Endothelial cell of umbilical vein (primary cell): ENCODE measurements at regions of chr3 and their contacts with region 1.

Region 1: GRCh38 chr3:111717601-111718000 is 122.5 kb upstream of the ZBED2 start:
- DNase-seq: peak; percentile 83
- H3K4me3 ChIP-seq: no peak overlapping the region
- H3K27ac ChIP-seq: peak overlapping the region; percentile 18
- H3K4me1 ChIP-seq: peaks cover 6% of the 10 kb centered on the region
- H3K27me3 ChIP-seq: no peaks in the 10 kb centered on the region
- CTCF ChIP-seq: peak; percentile 81 to 82
- POLR2A ChIP-seq: no peak

Region 2: GRCh38 chr3:111577794-111578685 is 139.6 kb before region 1 on chr3:
- CTCF ChIA-PET with region 1: interaction called, 31 read pairs
- POLR2A ChIA-PET with region 1: no interaction called
- dilution Hi-C with region 1: no loop called
- intact Hi-C with region 1: no loop called
- DNase-seq: peak; percentile 25
- H3K4me3 ChIP-seq: no peak overlapping the region
- H3K27ac ChIP-seq: no peak overlapping the region
- H3K4me1 ChIP-seq: no peaks in the 10 kb centered on the region
- H3K27me3 ChIP-seq: peaks cover 0 to 7% of the 10 kb centered on the region in 2 experiments
- CTCF ChIP-seq: peak; percentile 4 to 15
- POLR2A ChIP-seq: no peak

Region 3: GRCh38 chr3:111700054-111700453 is 17.5 kb before region 1 on chr3:
- CTCF ChIA-PET with region 1: interaction called, 25 read pairs
- POLR2A ChIA-PET with region 1: no interaction called
- dilution Hi-C with region 1: no loop called
- intact Hi-C with region 1: no loop called
- DNase-seq: no peak
- H3K4me3 ChIP-seq: no peak overlapping the region
- H3K27ac ChIP-seq: no peak overlapping the region
- H3K4me1 ChIP-seq: peaks cover 12% of the 10 kb centered on the region
- H3K27me3 ChIP-seq: no peaks in the 10 kb centered on the region
- CTCF ChIP-seq: no peak
- POLR2A ChIP-seq: no peak

Region 4: GRCh38 chr3:111859974-111860859 is 142.6 kb after region 1 on chr3:
- CTCF ChIA-PET with region 1: interaction called, 424 read pairs
- POLR2A ChIA-PET with region 1: interaction called, 6 read pairs
- dilution Hi-C with region 1: no loop called
- intact Hi-C with region 1: loop called (anchors 1 kb)
- DNase-seq: peak; percentile 88
- H3K4me3 ChIP-seq: peak overlapping the region; percentile 75 to 95 (median 93)
- H3K27ac ChIP-seq: peak overlapping the region; percentile 98
- H3K4me1 ChIP-seq: peaks cover 46% of the 10 kb centered on the region
- H3K27me3 ChIP-seq: no peaks in the 10 kb centered on the region
- CTCF ChIP-seq: peak; percentile 32 to 41
- POLR2A ChIP-seq: peak; percentile 19

Region 5: GRCh38 chr3:111895079-111895478 is 177.5 kb after region 1 on chr3:
- CTCF ChIA-PET with region 1: interaction called, 129 read pairs
- POLR2A ChIA-PET with region 1: no interaction called
- dilution Hi-C with region 1: no loop called
- intact Hi-C with region 1: loop called (anchors 1 kb)
- DNase-seq: peak; percentile 84
- H3K4me3 ChIP-seq: no peak overlapping the region
- H3K27ac ChIP-seq: no peak overlapping the region
- H3K4me1 ChIP-seq: peaks cover 9% of the 10 kb centered on the region
- H3K27me3 ChIP-seq: no peaks in the 10 kb centered on the region
- CTCF ChIP-seq: peak; percentile 55 to 57
- POLR2A ChIP-seq: no peak

Region 6: GRCh38 chr3:111978493-111979433 is 261.2 kb after region 1 on chr3 and contains the start of gene ABHD10:
- CTCF ChIA-PET with region 1: interaction called, 35 read pairs
- POLR2A ChIA-PET with region 1: no interaction called
- dilution Hi-C with region 1: no loop called
- intact Hi-C with region 1: no loop called
- DNase-seq: peak; percentile 99
- H3K4me3 ChIP-seq: peak within 1 kb of the TSS; percentile 80 to 96 (median 96)
- H3K27ac ChIP-seq: peak within 1 kb of the TSS; percentile 33
- H3K4me1 ChIP-seq: peaks cover 21% of the 10 kb centered on the region
- H3K27me3 ChIP-seq: no peaks in the 10 kb centered on the region
- CTCF ChIP-seq: no peak
- POLR2A ChIP-seq: peak; percentile 90
- total RNA-seq, gene ABHD10: 26.2 and 37.0 TPM in 2 replicates

Region 7: GRCh38 chr3:112111785-112112402 is 394.3 kb after region 1 on chr3:
- CTCF ChIA-PET with region 1: interaction called, 11 read pairs
- POLR2A ChIA-PET with region 1: no interaction called
- dilution Hi-C with region 1: no loop called
- intact Hi-C with region 1: no loop called
- DNase-seq: peak; percentile 59
- H3K4me3 ChIP-seq: no peak overlapping the region
- H3K27ac ChIP-seq: no peak overlapping the region
- H3K4me1 ChIP-seq: peaks cover 7% of the 10 kb centered on the region
- H3K27me3 ChIP-seq: no peaks in the 10 kb centered on the region
- CTCF ChIP-seq: peak; percentile 70 to 79
- POLR2A ChIP-seq: no peak